Activated naive CD4-positive, alpha-beta T cell treated with anti-CD3 and anti-CD28 coated beads for 36 hours (primary cell): ENCODE measurements at regions of chr3 and their contacts with region 1.

Region 1: GRCh38 chr3:114527036-114527644 is 233.3 kb downstream of the TIGIT start:
- DNase-seq: peak; percentile 10
- H3K4me3 Mint-ChIP-seq: no peak overlapping the region
- H3K27ac Mint-ChIP-seq: no peak overlapping the region
- H3K4me1 Mint-ChIP-seq: no peaks in the 10 kb centered on the region
- H3K27me3 Mint-ChIP-seq: no peaks in the 10 kb centered on the region

Region 2: DNA sequence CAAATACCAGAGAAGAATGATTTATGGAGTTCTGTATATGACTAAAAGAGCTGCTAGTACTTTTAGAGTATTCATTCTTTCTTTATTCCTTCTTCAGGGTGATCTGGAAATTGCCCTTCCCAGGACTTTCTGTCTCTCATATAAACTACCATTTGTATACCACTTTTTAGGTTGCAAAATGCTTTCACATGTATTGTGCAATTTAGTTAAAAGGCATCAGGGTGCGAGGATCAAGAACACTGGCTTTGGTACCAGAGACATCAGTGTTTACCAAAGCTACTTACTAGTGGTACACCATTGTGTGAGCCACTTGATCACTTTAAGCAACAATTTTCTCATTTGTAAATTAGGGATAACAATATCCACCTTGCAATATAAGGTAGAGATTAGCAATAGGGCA is 18.1 kb after region 1 on chr3:
- CTCF ChIA-PET with region 1: no interaction called
- intact Hi-C with region 1: no loop called
- DNase-seq: no peak
- H3K4me3 Mint-ChIP-seq: no peak overlapping the region
- H3K27ac Mint-ChIP-seq: no peak overlapping the region
- H3K4me1 Mint-ChIP-seq: peaks cover 3% of the 10 kb centered on the region
- H3K27me3 Mint-ChIP-seq: no peaks in the 10 kb centered on the region

Region 3: GRCh38 chr3:114582929-114583328 is 55.8 kb after region 1 on chr3:
- CTCF ChIA-PET with region 1: interaction called, 6 read pairs
- intact Hi-C with region 1: loop called (anchors 5 kb)
- DNase-seq: peak; percentile 44
- H3K4me3 Mint-ChIP-seq: no peak overlapping the region
- H3K27ac Mint-ChIP-seq: no peak overlapping the region
- H3K4me1 Mint-ChIP-seq: peaks cover 6% of the 10 kb centered on the region
- H3K27me3 Mint-ChIP-seq: no peaks in the 10 kb centered on the region

Region 4: GRCh38 chr3:114775395-114775794 is 248.3 kb after region 1 on chr3:
- CTCF ChIA-PET with region 1: no interaction called
- intact Hi-C with region 1: no loop called
- DNase-seq: no peak
- H3K4me3 Mint-ChIP-seq: no peak overlapping the region
- H3K27ac Mint-ChIP-seq: no peak overlapping the region
- H3K4me1 Mint-ChIP-seq: no peaks in the 10 kb centered on the region
- H3K27me3 Mint-ChIP-seq: no peaks in the 10 kb centered on the region

Region 5: DNA sequence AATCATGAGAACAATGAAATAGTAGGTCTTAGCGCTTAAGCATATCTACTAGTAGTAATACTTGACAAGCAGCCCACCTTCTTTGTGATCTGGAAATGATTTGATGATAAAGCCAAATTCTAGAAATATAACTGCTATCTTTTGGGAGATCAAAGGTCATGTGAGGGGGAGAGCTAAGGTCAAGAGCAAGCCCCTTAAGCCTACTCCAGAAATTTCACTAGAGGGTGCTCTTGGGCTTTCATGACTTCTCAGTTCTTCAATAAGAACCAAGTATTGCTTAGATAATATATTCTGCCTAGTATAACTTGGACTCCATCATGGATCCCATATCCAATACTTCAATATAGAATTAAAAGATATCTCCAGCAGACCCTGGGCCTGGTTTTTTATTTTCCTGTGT is 300.4 kb after region 1 on chr3:
- CTCF ChIA-PET with region 1: no interaction called
- intact Hi-C with region 1: no loop called
- DNase-seq: peak; percentile 11
- H3K4me3 Mint-ChIP-seq: no peak overlapping the region
- H3K27ac Mint-ChIP-seq: no peak overlapping the region
- H3K4me1 Mint-ChIP-seq: peaks cover 4% of the 10 kb centered on the region
- H3K27me3 Mint-ChIP-seq: no peaks in the 10 kb centered on the region